ENCODE measurements at regions of chr9 and their contacts with region 1.

Region 1: GRCh38 chr9:75866273-75866871 is 24.1 kb upstream of the PCSK5 start:
- DNase-seq: peak; percentile 66
- H3K4me3 ChIP-seq: no peak overlapping the region
- H3K27ac ChIP-seq: no peak overlapping the region
- H3K4me1 ChIP-seq: no peaks in the 10 kb centered on the region
- H3K27me3 ChIP-seq: peaks cover 5 to 6% of the 10 kb centered on the region in 2 experiments
- CTCF ChIP-seq: peak; percentile 38 to 53
- POLR2A ChIP-seq: no peak

Region 2: DNA sequence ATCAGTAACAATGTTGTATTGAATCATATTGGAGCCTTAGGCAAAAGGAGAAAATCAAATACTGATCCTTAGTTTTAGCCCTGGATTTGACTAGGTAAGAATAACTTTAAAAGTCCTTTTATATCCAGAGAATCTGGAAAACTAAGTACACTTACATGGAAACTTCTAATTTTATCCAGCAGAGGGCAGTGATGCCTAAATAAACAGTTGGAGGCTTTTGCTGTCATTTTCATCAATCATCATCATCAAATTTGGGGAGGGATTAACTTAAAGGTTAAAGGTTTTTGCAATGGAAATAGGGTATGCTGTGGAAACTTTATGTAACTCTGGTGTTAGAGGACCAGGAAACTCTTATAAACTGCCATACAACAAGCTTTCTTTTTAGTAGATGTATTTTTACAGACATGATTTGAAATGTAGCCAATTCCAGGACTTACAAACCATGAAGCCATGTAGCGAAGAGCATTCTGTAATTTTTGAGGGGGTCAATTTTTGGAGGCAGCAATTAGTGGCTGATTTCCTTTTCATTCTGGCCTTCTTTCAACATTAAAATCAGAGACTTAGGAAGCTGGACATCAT is 665.4 kb before region 1 on chr9:
- CTCF ChIA-PET with region 1: interaction called, 29 read pairs
- POLR2A ChIA-PET with region 1: no interaction called
- dilution Hi-C with region 1: no loop called
- intact Hi-C with region 1: loop called (anchors 1 kb)
- DNase-seq: peak; percentile 62
- H3K4me3 ChIP-seq: no peak overlapping the region
- H3K27ac ChIP-seq: no peak overlapping the region
- H3K4me1 ChIP-seq: no peaks in the 10 kb centered on the region
- H3K27me3 ChIP-seq: peaks cover 0 to 3% of the 10 kb centered on the region in 2 experiments
- CTCF ChIP-seq: peak in 1 of 2 donors; percentile 37
- POLR2A ChIP-seq: no peak

Region 3: DNA sequence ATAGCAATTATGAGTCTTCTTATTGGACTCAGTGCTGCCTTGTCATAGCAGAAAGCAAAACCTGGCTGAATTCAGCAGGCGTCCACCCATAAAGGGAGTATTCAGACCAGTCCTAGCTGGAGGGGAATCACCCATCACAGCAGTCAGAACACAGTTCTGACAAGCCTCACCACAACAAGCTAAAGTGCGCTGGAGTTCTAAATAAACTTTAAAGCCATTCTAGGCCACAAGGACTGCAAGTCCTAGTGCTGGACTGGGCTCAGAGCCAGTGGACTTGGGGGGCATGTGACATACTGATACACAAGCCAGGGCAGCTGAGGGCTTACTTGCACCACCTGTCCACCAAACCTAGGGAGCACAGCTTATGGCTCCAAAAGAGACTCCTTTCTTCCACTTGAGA is 91.2 kb before region 1 on chr9:
- CTCF ChIA-PET with region 1: no interaction called
- POLR2A ChIA-PET with region 1: no interaction called
- dilution Hi-C with region 1: no loop called
- intact Hi-C with region 1: no loop called
- DNase-seq: no peak
- H3K4me3 ChIP-seq: no peak overlapping the region
- H3K27ac ChIP-seq: no peak overlapping the region
- H3K4me1 ChIP-seq: no peaks in the 10 kb centered on the region
- H3K27me3 ChIP-seq: no peaks in the 10 kb centered on the region
- CTCF ChIP-seq: no peak
- POLR2A ChIP-seq: no peak

Region 4: GRCh38 chr9:75847085-75847484 is 19.3 kb before region 1 on chr9:
- CTCF ChIA-PET with region 1: interaction called, 24 read pairs
- POLR2A ChIA-PET with region 1: no interaction called
- dilution Hi-C with region 1: no loop called
- intact Hi-C with region 1: no loop called
- DNase-seq: peak; percentile 2
- H3K4me3 ChIP-seq: no peak overlapping the region
- H3K27ac ChIP-seq: no peak overlapping the region
- H3K4me1 ChIP-seq: no peaks in the 10 kb centered on the region
- H3K27me3 ChIP-seq: no peaks in the 10 kb centered on the region
- CTCF ChIP-seq: no peak
- POLR2A ChIP-seq: no peak

Region 5: GRCh38 chr9:75880618-75881017 is 14.2 kb after region 1 on chr9:
- CTCF ChIA-PET with region 1: interaction called, 57 read pairs
- POLR2A ChIA-PET with region 1: no interaction called
- dilution Hi-C with region 1: no loop called
- intact Hi-C with region 1: no loop called
- DNase-seq: no peak
- H3K4me3 ChIP-seq: no peak overlapping the region
- H3K27ac ChIP-seq: no peak overlapping the region
- H3K4me1 ChIP-seq: no peaks in the 10 kb centered on the region
- H3K27me3 ChIP-seq: no peaks in the 10 kb centered on the region
- CTCF ChIP-seq: no peak
- POLR2A ChIP-seq: no peak

Region 6: GRCh38 chr9:76292246-76292645 is 425.9 kb after region 1 on chr9:
- CTCF ChIA-PET with region 1: interaction called, 11 read pairs
- POLR2A ChIA-PET with region 1: no interaction called
- dilution Hi-C with region 1: no loop called
- intact Hi-C with region 1: no loop called
- DNase-seq: no peak
- H3K4me3 ChIP-seq: no peak overlapping the region
- H3K27ac ChIP-seq: no peak overlapping the region
- H3K4me1 ChIP-seq: no peaks in the 10 kb centered on the region
- H3K27me3 ChIP-seq: no peaks in the 10 kb centered on the region
- CTCF ChIP-seq: no peak
- POLR2A ChIP-seq: no peak

Measured in endothelial cell of umbilical vein (primary cell).